ENCODE measurements at regions of chr11 and their contacts with region 1.

Region 1: DNA sequence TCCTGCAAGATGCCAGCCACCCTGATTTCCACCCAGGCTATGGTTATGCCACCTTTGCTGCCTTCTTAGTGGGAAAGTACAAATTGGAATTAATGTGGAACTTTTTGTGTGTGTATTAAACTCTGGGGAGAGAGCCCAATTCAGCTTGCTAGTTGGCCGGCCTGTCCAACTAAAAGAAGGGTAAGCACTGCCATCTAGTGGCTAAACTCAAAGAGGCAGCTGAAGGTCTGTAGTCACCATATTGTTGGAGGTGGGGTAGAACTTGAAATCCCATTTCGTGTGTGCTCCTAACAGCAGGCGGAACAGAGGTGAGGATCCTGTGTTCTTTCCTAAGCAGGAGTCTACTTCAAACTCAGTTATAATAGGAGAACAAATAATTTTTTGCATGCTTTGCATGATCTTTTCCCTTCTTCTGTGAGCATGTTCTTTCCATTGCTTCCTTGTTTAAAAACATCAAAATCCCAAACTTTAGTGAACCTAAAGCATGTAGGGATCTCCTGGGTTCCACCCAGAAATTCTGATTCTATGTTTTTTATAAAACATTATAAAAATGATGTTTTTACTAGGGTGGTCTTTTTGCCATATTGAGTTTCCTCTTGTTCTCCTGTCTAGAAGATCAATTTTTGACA is 138.8 kb upstream of the SORL1-AS1 start:
- DNase-seq: peak; percentile 82
- ATAC-seq: peak; percentile 73
- H3K4me3 Mint-ChIP-seq: no peak overlapping the region
- H3K27ac Mint-ChIP-seq: peak overlapping the region; percentile 66
- H3K4me1 Mint-ChIP-seq: peaks cover 22% of the 10 kb centered on the region
- H3K27me3 Mint-ChIP-seq: no peaks in the 10 kb centered on the region

Region 2: DNA sequence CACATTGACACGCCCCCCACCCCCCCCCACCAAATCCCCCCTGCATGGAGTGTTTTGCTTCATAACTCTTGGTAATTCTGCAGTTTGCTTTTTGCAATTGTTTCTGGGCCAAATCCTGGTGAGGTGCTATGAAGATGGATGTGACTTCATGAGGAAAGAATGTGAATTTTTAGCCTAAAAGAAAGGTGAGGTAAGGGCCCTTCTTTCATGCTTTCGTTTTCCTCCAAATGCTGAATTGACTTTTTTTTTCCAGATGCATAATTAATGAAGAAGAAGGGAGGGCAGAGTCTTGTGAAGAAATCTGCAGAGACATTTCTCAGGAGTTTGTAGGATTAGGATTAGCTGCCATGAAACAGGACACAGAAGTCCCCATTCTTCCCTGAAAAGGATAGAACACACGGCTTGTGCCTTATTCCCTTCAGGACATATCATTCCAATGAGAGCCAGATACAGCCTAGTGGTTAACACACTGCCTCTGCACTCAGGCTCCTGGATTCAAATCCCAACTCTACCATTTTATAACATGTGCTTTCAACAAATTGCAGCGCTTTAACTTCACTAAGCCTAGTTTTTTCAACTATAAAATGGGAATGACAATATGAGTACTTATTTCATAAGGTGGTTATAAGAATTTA is 587.2 kb before region 1 on chr11:
- CTCF ChIA-PET with region 1: no interaction called
- POLR2A ChIA-PET with region 1: no interaction called
- intact Hi-C with region 1: no loop called
- DNase-seq: no peak
- ATAC-seq: no peak
- H3K4me3 Mint-ChIP-seq: no peak overlapping the region
- H3K27ac Mint-ChIP-seq: no peak overlapping the region
- H3K4me1 Mint-ChIP-seq: no peaks in the 10 kb centered on the region
- H3K27me3 Mint-ChIP-seq: peaks cover 27% of the 10 kb centered on the region

Region 3: GRCh38 chr11:121249039-121249663 is 342.4 kb before region 1 on chr11:
- CTCF ChIA-PET with region 1: interaction called, 18 read pairs
- POLR2A ChIA-PET with region 1: no interaction called
- intact Hi-C with region 1: loop called (anchors 1 kb)
- DNase-seq: peak; percentile 54
- ATAC-seq: peak; percentile 87
- H3K4me3 Mint-ChIP-seq: no peak overlapping the region
- H3K27ac Mint-ChIP-seq: no peak overlapping the region
- H3K4me1 Mint-ChIP-seq: peaks cover 5% of the 10 kb centered on the region
- H3K27me3 Mint-ChIP-seq: peaks cover 6% of the 10 kb centered on the region

Region 4: GRCh38 chr11:121292495-121293287 is 298.8 kb before region 1 on chr11 and contains the start of gene SC5D:
- CTCF ChIA-PET with region 1: interaction called, 4 read pairs
- POLR2A ChIA-PET with region 1: no interaction called
- intact Hi-C with region 1: loop called in 1 of 2 experiments (anchors 2 kb)
- DNase-seq: peak; percentile 97
- ATAC-seq: peak; percentile 95
- H3K4me3 Mint-ChIP-seq: peak within 1 kb of the TSS; percentile 81
- H3K27ac Mint-ChIP-seq: peak within 1 kb of the TSS; percentile 91
- H3K4me1 Mint-ChIP-seq: peaks cover 36% of the 10 kb centered on the region
- H3K27me3 Mint-ChIP-seq: no peaks in the 10 kb centered on the region
- total RNA-seq, gene SC5D: 22.3 to 29.9 TPM

Region 5: DNA sequence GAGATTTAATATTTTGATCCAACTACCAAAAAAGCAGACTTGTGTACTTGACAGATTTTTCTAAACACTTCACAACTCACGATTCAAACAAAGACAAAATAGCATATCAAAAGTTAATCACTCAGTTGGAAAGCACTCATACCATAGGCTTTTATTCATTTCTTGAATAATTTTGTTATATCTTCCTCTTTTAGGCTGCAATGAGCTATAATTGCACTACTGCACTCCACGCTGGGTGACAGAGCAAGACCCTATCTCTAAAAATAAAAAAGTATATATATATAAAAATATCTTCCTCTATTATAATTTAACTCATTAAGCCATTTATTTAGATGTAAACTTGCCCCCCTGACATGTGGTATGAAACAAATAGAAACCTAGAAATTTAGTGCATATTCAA is 279.0 kb before region 1 on chr11:
- CTCF ChIA-PET with region 1: interaction called, 46 read pairs
- POLR2A ChIA-PET with region 1: no interaction called
- intact Hi-C with region 1: no loop called
- DNase-seq: no peak
- ATAC-seq: no peak
- H3K4me3 Mint-ChIP-seq: no peak overlapping the region
- H3K27ac Mint-ChIP-seq: no peak overlapping the region
- H3K4me1 Mint-ChIP-seq: peaks cover 35% of the 10 kb centered on the region
- H3K27me3 Mint-ChIP-seq: no peaks in the 10 kb centered on the region

Region 6: GRCh38 chr11:121318848-121319834 is 272.4 kb before region 1 on chr11:
- CTCF ChIA-PET with region 1: interaction called, 46 read pairs
- POLR2A ChIA-PET with region 1: no interaction called
- intact Hi-C with region 1: loop called (anchors 1 kb)
- DNase-seq: peak; percentile 27
- ATAC-seq: peak; percentile 63
- H3K4me3 Mint-ChIP-seq: no peak overlapping the region
- H3K27ac Mint-ChIP-seq: no peak overlapping the region
- H3K4me1 Mint-ChIP-seq: peaks cover 18% of the 10 kb centered on the region
- H3K27me3 Mint-ChIP-seq: peaks cover 3% of the 10 kb centered on the region

Region 7: DNA sequence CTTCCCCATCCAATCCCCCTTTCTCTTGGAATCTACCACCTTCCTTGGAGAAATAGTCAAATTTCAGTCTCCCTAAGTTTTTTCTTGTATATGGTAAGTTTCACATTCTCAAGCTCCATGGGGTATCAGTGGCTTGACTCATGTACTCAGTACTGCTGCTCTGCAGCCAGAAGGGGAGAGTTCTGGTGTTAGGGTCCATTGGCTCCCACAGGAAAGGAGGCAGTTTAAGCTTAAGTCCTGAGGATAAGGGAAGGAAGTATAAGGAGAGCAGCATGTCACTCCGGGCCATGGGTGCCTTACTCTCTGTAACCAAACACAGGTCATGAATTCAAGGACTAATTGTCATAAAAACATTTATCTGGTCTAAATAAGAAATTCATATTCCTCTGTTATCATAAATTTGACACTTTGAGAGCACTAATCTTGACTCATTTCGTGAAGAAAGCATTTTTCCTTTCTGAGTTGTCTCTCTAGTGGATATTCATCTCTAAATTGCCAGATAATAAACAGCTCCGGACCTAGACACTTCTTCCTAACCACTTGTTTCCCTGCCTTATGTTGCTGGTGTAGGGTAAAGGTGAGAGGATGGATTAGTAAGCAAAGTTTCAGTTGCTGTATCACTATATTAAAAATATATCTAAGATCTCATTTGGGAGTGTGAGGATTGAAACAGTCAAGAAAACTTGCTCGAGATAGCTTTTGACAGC is 159.5 kb before region 1 on chr11:
- CTCF ChIA-PET with region 1: interaction called, 6 read pairs
- POLR2A ChIA-PET with region 1: no interaction called
- intact Hi-C with region 1: loop called in 1 of 2 experiments (anchors 5 kb)
- DNase-seq: no peak
- ATAC-seq: peak; percentile 94
- H3K4me3 Mint-ChIP-seq: no peak overlapping the region
- H3K27ac Mint-ChIP-seq: peak overlapping the region; percentile 76
- H3K4me1 Mint-ChIP-seq: peaks cover 41% of the 10 kb centered on the region
- H3K27me3 Mint-ChIP-seq: no peaks in the 10 kb centered on the region

Region 8: GRCh38 chr11:121451986-121452608 is 139.4 kb before region 1 on chr11 and contains the start of gene SORL1:
- CTCF ChIA-PET with region 1: interaction called, 4 read pairs
- POLR2A ChIA-PET with region 1: no interaction called
- intact Hi-C with region 1: loop called (anchors 1 to 2 kb)
- DNase-seq: peak; percentile 89
- ATAC-seq: peak; percentile 59
- H3K4me3 Mint-ChIP-seq: peak within 1 kb of the TSS; percentile 89
- H3K27ac Mint-ChIP-seq: peak within 1 kb of the TSS; percentile 94
- H3K4me1 Mint-ChIP-seq: peaks cover 84% of the 10 kb centered on the region
- H3K27me3 Mint-ChIP-seq: no peaks in the 10 kb centered on the region
- total RNA-seq, gene SORL1: 53.5 to 68.0 TPM

Measured in activated CD4-positive, alpha-beta T cell treated with anti-CD3 and anti-CD28 coated beads for 36 hours (primary cell).